ENCODE measurements at regions of chr2 and their contacts with region 1.

Region 1: GRCh38 chr2:241315093-241315878 is at the start of gene HDLBP:
- DNase-seq: peak; percentile 95 to 99 (median 97)
- H3K4me3 ChIP-seq: peak within 1 kb of the TSS; percentile 66 to 100 (median 92)
- H3K27ac ChIP-seq: peak within 1 kb of the TSS; percentile 90 to 100 (median 99)
- H3K27me3 ChIP-seq: no peaks in the 10 kb centered on the region
- CTCF ChIP-seq: peak; percentile 43 to 86 (median 68)
- total RNA-seq, gene HDLBP: 216 to 367 (median 256) TPM

Region 2: GRCh38 chr2:240851078-240851991 is 464.0 kb before region 1 on chr2:
- intact Hi-C with region 1: no loop called
- DNase-seq: peak; percentile 85 to 95 (median 91)
- H3K4me3 ChIP-seq: no peak overlapping the region
- H3K27ac ChIP-seq: peak overlapping the region in 1 of 59 donors; percentile 66
- H3K27me3 ChIP-seq: no peaks in the 10 kb centered on the region
- CTCF ChIP-seq: peak; percentile 83 to 99 (median 95)

Region 3: GRCh38 chr2:241102239-241102803 is 213.0 kb before region 1 on chr2 and contains the start of gene MTERF4:
- intact Hi-C with region 1: loop called (anchors 1 to 2 kb)
- DNase-seq: peak; percentile 74 to 93 (median 86)
- H3K4me3 ChIP-seq: peak within 1 kb of the TSS; percentile 67 to 99 (median 94)
- H3K27ac ChIP-seq: peak within 1 kb of the TSS; percentile 41 to 97 (median 83)
- H3K27me3 ChIP-seq: no peaks in the 10 kb centered on the region
- CTCF ChIP-seq: peak in 31 of 56 donors; percentile 3 to 59 (median 29)
- total RNA-seq, gene MTERF4: 34.2 to 84.6 (median 58.4) TPM

Region 4: GRCh38 chr2:241217320-241218031 is 97.8 kb before region 1 on chr2:
- intact Hi-C with region 1: loop called in 1 of 2 experiments (anchors 5 kb)
- DNase-seq: peak; percentile 53 to 80 (median 66)
- H3K4me3 ChIP-seq: peak overlapping the region; percentile 43 to 81 (median 65)
- H3K27ac ChIP-seq: peak overlapping the region; percentile 51 to 97 (median 90)
- H3K27me3 ChIP-seq: no peaks in the 10 kb centered on the region
- CTCF ChIP-seq: peak in 19 of 56 donors; percentile 7 to 43 (median 23)

Region 5: DNA sequence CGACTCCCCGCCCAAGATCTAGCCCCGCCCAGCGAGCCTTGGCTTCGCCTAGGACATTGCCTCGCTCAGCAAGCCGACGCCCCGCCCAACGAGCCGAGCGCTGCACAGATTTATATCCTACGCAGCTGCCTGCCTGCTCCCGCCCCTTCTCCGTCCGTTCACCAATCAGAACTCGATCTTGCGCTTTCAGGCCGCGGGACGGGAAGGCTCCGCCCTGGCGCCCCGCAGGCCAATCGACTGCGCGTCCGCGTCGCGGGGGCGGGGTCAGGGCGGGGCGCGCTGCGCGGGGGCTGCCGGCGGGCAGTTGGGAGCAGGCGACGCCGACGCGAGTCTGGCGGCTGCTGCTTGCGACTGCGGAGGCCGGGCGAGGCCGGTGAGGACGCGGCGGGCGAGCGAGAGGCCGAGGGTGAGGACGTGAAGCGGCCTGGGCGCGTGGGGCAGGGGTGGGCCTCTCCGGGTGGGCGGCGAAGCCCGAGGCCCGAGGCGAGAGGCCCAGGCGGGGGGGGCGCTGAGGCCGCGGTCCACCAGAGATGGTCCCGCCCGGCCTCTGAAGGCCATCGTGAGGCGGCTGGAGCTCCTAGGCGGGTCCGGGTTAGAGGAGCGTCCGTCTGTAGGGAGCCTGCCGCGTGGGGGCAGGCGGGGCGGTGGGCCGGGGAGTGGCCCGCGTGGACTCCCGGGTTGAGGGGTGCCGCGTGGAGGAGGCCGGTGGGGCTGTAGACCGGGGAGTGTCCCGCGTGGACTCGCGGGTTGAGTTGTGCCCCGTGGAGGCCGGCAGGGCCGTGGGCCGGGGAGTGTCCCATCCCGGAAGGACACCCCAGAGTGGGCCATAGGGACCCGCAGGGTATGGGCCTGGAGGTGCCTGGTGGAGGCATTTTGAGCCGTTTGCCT is 40.9 kb after region 1 on chr2 and contains the start of gene FARP2:
- intact Hi-C with region 1: loop called (anchors 1 to 5 kb)
- DNase-seq: peak; percentile 99 to 100 (median 100)
- H3K4me3 ChIP-seq: peak within 1 kb of the TSS; percentile 71 to 99 (median 91)
- H3K27ac ChIP-seq: peak within 1 kb of the TSS in 57 of 59 donors; percentile 29 to 90 (median 80)
- H3K27me3 ChIP-seq: no peaks in the 10 kb centered on the region
- CTCF ChIP-seq: peak in 6 of 56 donors; percentile 3 to 28 (median 10)
- total RNA-seq, gene FARP2: 39.8 to 107 (median 67.7) TPM

Region 6: DNA sequence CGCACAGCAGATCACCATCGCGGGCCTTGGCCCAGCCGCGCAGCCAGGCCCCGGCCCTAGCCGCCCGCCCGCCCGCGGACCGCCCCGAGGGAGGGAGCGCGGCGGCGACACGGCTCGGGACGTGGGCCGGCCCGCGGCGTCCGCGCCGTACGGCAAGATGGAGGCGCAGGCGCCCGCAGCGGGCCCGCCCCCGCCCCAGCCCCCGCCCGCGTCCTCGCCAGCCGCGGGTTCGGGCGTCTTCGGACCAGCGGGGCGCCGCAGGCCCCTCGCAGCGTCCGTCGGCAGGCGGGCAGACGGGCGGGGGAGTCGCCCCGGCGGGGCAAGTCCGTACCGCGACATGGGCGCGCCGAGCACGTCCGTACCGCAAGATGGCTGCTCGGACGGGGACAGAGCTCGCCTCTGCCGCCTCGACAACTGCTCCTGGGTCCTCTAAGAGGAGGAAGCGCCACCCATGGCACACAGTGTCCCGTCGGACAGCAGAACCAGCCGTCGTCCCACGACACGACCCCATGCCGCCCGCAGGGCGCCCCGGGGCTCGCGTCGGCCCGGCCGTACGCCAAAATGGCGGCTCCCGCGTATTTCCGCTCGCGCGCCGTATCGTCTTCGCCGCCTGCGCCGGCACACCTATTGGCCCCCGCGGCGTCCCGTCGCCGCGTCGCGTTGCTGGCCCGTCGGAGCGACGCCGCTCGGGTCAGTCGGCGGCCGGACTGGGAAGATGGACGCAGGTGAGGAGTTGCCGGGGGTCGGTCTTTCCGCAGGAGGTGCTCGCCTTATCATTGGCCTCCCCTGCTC is 321.9 kb after region 1 on chr2 and contains the starts of genes ATG4B and THAP4:
- intact Hi-C with region 1: loop called (anchors 1 to 5 kb)
- DNase-seq: peak; percentile 69 to 92 (median 81)
- H3K4me3 ChIP-seq: peak within 1 kb of the TSS; percentile 57 to 99 (median 86)
- H3K27ac ChIP-seq: peak within 1 kb of the TSS; percentile 91 to 100 (median 98)
- H3K27me3 ChIP-seq: no peaks in the 10 kb centered on the region
- CTCF ChIP-seq: peak in 24 of 56 donors; percentile 7 to 48 (median 22)
- total RNA-seq, gene ATG4B: 79.3 to 164 (median 118) TPM
- total RNA-seq, gene THAP4: 35.1 to 69.3 (median 54.0) TPM

Measured in dorsolateral prefrontal cortex (tissue), 120 donors.